ENCODE measurements at regions of chrX and their contacts with region 1.

Region 1: GRCh38 chrX:54044126-54044876 is at the start of gene PHF8:
- DNase-seq: peak; percentile 97
- H3K4me3 Mint-ChIP-seq: peak within 1 kb of the TSS; percentile 93
- H3K27ac Mint-ChIP-seq: peak within 1 kb of the TSS; percentile 94
- H3K4me1 Mint-ChIP-seq: peaks cover 24% of the 10 kb centered on the region
- H3K27me3 Mint-ChIP-seq: no peaks in the 10 kb centered on the region
- CTCF ChIP-seq: no peak
- total RNA-seq, gene PHF8: 32.3 and 36.1 TPM in 2 replicates

Region 2: GRCh38 chrX:53654376-53654775 is 389.9 kb before region 1 on chrX:
- CTCF ChIA-PET with region 1: no interaction called
- intact Hi-C with region 1: loop called (anchors 10 kb)
- DNase-seq: no peak
- H3K4me3 Mint-ChIP-seq: no peak overlapping the region
- H3K27ac Mint-ChIP-seq: no peak overlapping the region
- H3K4me1 Mint-ChIP-seq: no peaks in the 10 kb centered on the region
- H3K27me3 Mint-ChIP-seq: no peaks in the 10 kb centered on the region
- CTCF ChIP-seq: no peak

Region 3: GRCh38 chrX:54182864-54183608 is 138.7 kb after region 1 on chrX and contains the start of gene FAM120C:
- CTCF ChIA-PET with region 1: interaction called, 5 read pairs
- intact Hi-C with region 1: loop called (anchors 5 kb)
- DNase-seq: peak; percentile 67
- H3K4me3 Mint-ChIP-seq: peak within 1 kb of the TSS; percentile 73
- H3K27ac Mint-ChIP-seq: peak within 1 kb of the TSS; percentile 79
- H3K4me1 Mint-ChIP-seq: peaks cover 32% of the 10 kb centered on the region
- H3K27me3 Mint-ChIP-seq: no peaks in the 10 kb centered on the region
- CTCF ChIP-seq: no peak
- total RNA-seq, gene FAM120C: 23.7 and 29.2 TPM in 2 replicates

Region 4: DNA sequence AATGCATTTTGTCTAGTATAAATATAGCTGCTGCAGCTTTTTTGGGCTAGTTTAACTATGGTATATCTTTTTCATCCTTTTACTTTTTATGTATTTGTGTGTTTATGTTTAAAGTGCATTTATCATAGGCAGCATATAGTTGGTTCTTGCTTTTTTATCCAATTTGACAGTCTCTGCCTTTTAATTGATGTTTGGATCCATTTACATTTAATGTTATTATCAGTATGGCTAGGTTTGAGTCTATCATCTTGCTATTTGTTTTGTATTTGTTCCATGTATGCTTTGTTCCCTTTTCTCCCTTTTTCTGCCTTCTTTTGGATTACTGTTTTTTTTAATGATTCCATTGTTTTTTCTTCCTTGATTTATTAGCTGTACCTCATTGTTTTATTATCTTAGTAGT is 526.0 kb after region 1 on chrX:
- CTCF ChIA-PET with region 1: no interaction called
- intact Hi-C with region 1: no loop called
- DNase-seq: no peak
- H3K4me3 Mint-ChIP-seq: no peak overlapping the region
- H3K27ac Mint-ChIP-seq: no peak overlapping the region
- H3K4me1 Mint-ChIP-seq: no peaks in the 10 kb centered on the region
- H3K27me3 Mint-ChIP-seq: no peaks in the 10 kb centered on the region
- CTCF ChIP-seq: no peak